ENCODE measurements at regions of chr13 and their contacts with region 1.

Region 1: GRCh38 chr13:41310963-41311606 is at the start of gene NAA16:
- DNase-seq: peak; percentile 93
- H3K4me3 ChIP-seq: peak within 1 kb of the TSS; percentile 79
- H3K27ac ChIP-seq: peak within 1 kb of the TSS; percentile 74
- H3K4me1 ChIP-seq: peaks cover 37% of the 10 kb centered on the region
- CTCF ChIP-seq: 0 out of 2 replicates have a peak, but pooled peaks have one; percentile 1
- total RNA-seq, gene NAA16: 22.1 and 22.4 TPM in 2 replicates

Region 2: GRCh38 chr13:41263261-41264027 is 47.6 kb before region 1 on chr13 and contains the start of gene MTRF1:
- CTCF ChIA-PET with region 1: no interaction called
- POLR2A ChIA-PET with region 1: no interaction called
- intact Hi-C with region 1: loop called (anchors 1 kb)
- DNase-seq: peak; percentile 89
- H3K4me3 ChIP-seq: peak within 1 kb of the TSS; percentile 80
- H3K27ac ChIP-seq: peak within 1 kb of the TSS; percentile 60
- H3K4me1 ChIP-seq: peaks cover 7% of the 10 kb centered on the region
- CTCF ChIP-seq: no peak
- total RNA-seq, gene MTRF1: 22.1 and 24.9 TPM in 2 replicates

Region 3: GRCh38 chr13:41791056-41791455 is 480.0 kb after region 1 on chr13:
- CTCF ChIA-PET with region 1: no interaction called
- POLR2A ChIA-PET with region 1: no interaction called
- intact Hi-C with region 1: no loop called
- DNase-seq: no peak
- H3K4me3 ChIP-seq: no peak overlapping the region
- H3K27ac ChIP-seq: no peak overlapping the region
- H3K4me1 ChIP-seq: no peaks in the 10 kb centered on the region
- CTCF ChIP-seq: no peak

Measured in OCI-LY7 (cell line).